Left lung (tissue), 14 donors: ENCODE measurements at regions of chr7 and their contacts with region 1.

Region 1: GRCh38 chr7:134316539-134317344 is at the start of gene SLC35B4:
- DNase-seq: peak; percentile 94 to 98 (median 98)
- ATAC-seq: peak; percentile 100
- H3K4me3 ChIP-seq: peak within 1 kb of the TSS; percentile 63 to 83
- H3K27ac ChIP-seq: peak within 1 kb of the TSS; percentile 69 to 75
- H3K4me1 ChIP-seq: peaks cover 0 to 7% of the 10 kb centered on the region in 2 donors
- H3K27me3 ChIP-seq: no peaks in the 10 kb centered on the region
- CTCF ChIP-seq: peak in 1 of 2 donors; percentile 48
- polyA plus RNA-seq, gene SLC35B4: 19.8 to 33.1 (median 23.2) TPM

Region 2: GRCh38 chr7:134126966-134127848 is 189.5 kb before region 1 on chr7 and contains the start of gene LRGUK:
- intact Hi-C with region 1: loop called in 1 of 2 experiments (anchors 10 kb)
- DNase-seq: peak; percentile 82 to 92 (median 88)
- ATAC-seq: peak; percentile 100
- H3K4me3 ChIP-seq: peak within 1 kb of the TSS; percentile 52 to 61
- H3K27ac ChIP-seq: no peak within 1 kb of the TSS
- H3K4me1 ChIP-seq: peaks cover 0 to 3% of the 10 kb centered on the region in 2 donors
- H3K27me3 ChIP-seq: no peaks in the 10 kb centered on the region
- CTCF ChIP-seq: no peak
- polyA plus RNA-seq, gene LRGUK: 1.5 to 2.7 (median 2.0) TPM

Region 3: GRCh38 chr7:134750083-134751062 is 433.6 kb after region 1 on chr7:
- intact Hi-C with region 1: no loop called
- DNase-seq: peak in 2 of 4 donors; percentile 30 to 44
- ATAC-seq: peak; percentile 85
- H3K4me3 ChIP-seq: no peak overlapping the region
- H3K27ac ChIP-seq: no peak overlapping the region
- H3K4me1 ChIP-seq: no peaks in the 10 kb centered on the region
- H3K27me3 ChIP-seq: no peaks in the 10 kb centered on the region
- CTCF ChIP-seq: peak; percentile 66 to 73